GM10248 (cell line): ENCODE measurements at regions of chr7 and their contacts with region 1.

Region 1: DNA sequence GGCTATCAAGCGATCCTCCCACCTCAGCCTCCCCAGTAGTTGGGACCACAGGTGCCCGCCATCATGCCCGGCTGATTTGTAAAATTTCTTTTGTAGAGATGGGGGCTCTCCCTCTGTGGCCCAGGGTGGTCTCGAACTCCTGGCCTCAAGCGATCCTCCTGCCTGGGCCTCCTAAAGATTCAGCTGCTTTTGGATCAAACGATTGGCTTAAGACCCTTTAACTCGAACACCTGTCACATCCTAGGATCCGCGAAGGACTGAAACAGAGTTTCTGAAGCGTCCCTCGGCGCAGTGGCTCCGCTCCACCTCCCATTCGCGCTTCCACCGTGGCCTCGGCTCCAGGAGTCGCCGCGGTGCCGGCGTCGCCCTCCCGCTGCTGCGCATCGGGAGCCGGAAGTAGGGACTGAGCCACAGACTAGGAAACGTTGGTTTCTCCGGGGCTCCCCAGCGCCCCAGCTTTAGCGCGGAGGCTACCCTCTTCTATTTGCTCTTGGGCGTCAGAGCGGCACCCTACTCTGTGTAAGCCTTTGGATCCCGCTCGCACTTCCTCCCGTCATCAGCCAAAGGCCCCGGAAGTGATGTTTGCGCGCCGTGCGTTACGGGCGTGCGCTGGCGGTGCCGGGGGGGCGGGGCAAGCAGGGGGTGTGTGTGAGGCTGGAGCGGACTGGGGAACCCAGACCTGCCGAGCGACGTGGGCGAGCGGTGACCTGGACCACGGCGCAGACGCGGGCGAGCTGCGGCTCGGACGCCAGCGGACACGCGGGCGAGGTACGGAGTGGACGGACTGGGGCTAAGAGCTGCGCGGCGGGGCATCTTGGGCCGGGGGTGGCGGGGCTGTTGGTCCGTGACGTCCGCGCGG is 53.0 kb downstream of the KCTD7 start:
- DNase-seq: peak; percentile 97
- CTCF ChIP-seq: no peak

Region 2: DNA sequence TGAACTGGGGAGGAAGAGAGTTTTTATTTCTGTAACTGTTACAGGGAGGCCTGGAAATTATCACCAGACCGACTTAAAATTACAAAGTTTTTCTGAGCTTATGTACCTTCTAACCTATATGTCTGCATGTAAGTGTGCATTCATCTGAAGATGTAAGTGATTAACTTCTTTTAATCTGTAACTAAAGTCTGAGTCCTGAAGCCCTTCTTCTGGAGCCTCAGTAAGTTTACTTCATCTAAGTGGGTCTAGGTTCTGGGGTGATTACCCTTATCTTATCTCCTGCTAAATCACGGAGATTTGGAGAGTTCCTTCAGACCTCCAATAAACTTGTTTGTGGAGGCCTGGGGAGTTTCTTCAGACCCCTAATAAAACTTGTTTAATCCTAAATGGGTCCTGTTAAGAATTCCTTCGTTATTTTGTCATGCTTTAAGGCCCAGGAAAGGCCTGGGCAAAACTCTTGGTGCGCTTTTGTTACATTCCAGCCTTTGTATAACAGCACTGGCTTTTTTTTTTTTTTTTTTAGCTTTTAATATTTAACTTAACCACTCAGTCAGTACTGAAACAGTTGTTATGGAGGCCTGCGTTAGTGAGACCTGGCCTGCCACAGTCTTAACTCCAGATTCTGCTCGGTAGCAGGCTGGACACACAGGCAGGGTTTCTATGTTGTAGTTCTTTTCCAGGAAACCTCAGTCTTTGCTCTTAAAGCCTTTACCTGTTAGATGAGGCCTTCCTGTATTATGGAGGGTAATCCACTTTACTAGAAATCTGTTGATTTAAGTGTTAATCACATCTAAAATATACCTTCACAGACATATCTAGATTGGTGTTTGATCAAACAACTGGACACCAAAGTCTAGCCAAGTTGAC is 443.6 kb before region 1 on chr7:
- CTCF ChIA-PET with region 1: no interaction called
- POLR2A ChIA-PET with region 1: no interaction called
- DNase-seq: no peak
- CTCF ChIP-seq: no peak

Region 3: GRCh38 chr7:66694286-66694685 is 12.6 kb after region 1 on chr7:
- CTCF ChIA-PET with region 1: no interaction called
- POLR2A ChIA-PET with region 1: no interaction called
- DNase-seq: no peak
- CTCF ChIP-seq: no peak

Region 4: DNA sequence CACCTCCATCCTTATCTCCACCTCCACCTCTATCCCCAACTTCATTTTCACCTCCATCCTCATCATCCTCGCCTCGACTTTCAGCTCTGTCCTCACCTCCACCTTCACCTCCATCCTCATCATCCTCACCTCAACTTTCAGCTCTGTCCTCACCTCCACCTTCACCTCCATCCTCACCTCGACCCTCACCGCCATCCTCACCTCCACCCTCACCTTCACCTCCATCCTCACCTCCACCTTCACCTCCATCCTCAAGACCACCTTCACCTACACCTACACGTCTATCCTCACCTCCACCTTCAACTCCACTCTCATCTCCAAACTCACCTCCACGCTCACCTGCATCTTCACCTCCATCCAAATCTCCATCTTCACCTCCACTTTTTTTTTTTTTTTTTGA is 46.9 kb after region 1 on chr7:
- CTCF ChIA-PET with region 1: no interaction called
- POLR2A ChIA-PET with region 1: no interaction called
- DNase-seq: no peak
- CTCF ChIP-seq: no peak

Region 5: GRCh38 chr7:66740302-66740979 is 58.7 kb after region 1 on chr7 and contains the start of gene RABGEF1:
- CTCF ChIA-PET with region 1: no interaction called
- POLR2A ChIA-PET with region 1: interaction called, 16 read pairs
- DNase-seq: peak; percentile 97
- CTCF ChIP-seq: no peak